Activated T-helper 1 cell treated with anti-CD3 and anti-CD28 coated beads, Interleukin-12 subunit alpha, Interleukin-12 subunit beta, Interleukin-2, Interleukin-4 antibody, amounts not matched to agents 30 ng/mL and 10 ng/mL and 1 ng/mL, durations not matched to agents 14 hours and 24 hours and 36 hours (primary cell): ENCODE measurements at regions of chr5 and their contacts with region 1.

Region 1: DNA sequence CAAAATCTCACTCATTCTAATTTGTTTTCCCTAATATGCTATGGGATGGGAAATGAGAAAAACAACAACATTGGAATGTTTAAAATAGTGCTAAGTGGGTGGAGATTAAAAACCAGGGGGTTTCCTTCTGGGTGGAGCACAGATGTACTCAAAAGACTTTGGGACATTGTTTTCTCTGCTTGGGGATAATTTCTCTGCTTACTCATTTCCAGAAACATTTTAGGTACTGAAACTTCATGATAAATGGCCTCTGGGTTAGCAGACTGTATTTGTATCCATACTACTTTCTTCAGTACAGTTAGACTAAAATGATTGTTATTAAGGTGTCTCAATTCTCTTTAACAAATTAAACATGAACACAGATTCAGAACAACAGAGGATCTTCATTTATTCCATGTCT is 17.4 kb downstream of the ELOVL7 start:
- DNase-seq: no peak
- H3K4me3 Mint-ChIP-seq: no peak overlapping the region
- H3K27ac Mint-ChIP-seq: no peak overlapping the region
- H3K4me1 Mint-ChIP-seq: peaks cover 31% of the 10 kb centered on the region
- H3K27me3 Mint-ChIP-seq: no peaks in the 10 kb centered on the region

Region 2: DNA sequence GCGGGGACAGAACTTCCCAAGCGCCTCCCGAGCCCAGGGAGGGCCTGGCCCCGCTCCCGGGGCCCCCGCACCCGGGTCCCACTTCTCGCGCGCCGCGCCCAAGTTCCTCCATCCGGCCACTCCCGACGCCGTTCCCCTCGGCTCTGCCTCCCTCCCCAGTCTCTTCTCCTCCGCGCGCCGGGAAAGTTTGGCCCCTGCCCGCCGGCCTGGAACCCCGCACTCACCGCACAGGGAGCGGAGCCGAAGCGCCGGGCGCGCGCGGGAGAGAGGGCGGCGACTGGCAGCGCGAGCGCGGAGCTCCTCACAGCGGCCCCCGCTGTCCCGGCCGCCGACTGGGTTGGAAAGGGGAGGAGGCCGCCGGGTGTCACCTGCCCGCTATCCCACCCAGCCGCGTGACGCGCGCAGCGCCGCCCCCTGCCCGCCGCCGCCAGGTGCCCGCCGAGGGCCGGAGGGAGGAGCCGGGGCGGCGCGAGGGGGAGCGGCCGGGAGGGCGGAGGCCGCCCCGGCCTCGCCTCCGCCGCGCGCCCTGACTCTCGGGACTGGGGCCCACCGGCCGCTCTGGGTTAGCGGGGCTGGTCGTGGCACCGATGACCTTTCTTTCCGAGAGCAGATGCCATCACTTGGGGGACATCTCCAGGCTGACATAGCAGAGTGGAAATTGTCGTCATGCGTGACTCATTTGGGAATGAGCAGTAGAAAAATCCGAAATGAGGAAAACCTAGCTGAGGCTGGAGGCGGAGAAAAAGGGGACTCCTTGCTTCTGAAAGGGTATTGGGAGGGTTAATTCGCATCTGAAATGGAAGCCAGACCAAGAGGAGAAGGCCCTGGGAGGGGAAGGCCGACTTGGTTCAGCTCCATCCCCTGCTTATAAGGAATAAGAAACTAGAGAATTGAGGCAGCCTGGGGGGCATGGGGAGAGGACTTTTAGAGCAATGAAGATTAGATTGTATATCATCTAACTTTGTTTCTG is 17.6 kb after region 1 on chr5 and contains the start of gene ELOVL7:
- intact Hi-C with region 1: loop called (anchors 2 kb)
- DNase-seq: peak; percentile 37
- H3K4me3 Mint-ChIP-seq: peak within 1 kb of the TSS; percentile 84
- H3K27ac Mint-ChIP-seq: no peak within 1 kb of the TSS
- H3K4me1 Mint-ChIP-seq: peaks cover 12% of the 10 kb centered on the region
- H3K27me3 Mint-ChIP-seq: peaks cover 63% of the 10 kb centered on the region
- total RNA-seq, gene ELOVL7: 0.34 and 0.49 TPM in 2 replicates